ENCODE measurements at regions of chr4 and their contacts with region 1.

Region 1: DNA sequence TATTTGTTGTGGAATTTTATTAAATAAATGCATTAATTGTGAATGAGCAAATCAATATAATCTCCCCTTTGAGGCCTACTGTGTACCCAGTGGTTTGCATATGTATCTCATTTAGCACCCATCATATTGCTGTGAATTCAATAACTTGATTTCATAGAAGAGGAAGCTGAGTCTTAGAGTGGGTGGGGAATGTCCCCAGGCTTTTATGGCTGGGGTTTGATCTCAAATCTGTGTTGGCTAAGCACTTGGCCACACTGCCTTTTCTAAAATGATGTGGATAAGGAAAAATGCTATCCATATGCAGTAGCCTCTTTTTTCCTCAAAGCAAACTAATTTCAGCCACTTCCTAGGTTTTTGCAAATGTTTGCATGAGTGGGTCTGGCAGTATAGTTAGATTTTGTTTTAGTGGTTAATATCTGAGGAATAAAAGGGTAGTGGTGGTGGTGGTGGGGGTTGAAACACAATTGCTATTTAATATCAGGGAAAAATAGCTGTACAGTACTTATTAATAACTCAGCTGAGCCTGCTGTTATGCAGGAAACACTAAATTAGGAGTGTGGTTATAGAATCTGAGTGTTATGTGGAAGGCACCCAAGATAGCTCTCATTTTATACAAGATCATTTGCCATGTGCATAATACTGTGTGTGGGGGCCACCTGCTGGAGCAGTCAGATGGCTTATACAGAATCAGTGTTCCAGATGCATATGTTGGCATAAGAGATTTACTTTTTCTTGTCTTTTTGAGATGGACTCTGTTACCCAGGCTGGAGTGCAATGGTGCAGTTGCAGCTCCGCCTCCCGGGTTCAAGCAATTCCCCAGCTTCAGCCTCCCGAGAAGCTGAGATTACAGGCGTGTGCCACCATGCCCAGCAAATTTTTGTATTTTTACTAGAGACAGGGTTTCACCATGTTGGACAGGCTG is 108.0 kb downstream of the TMEM131L start:
- DNase-seq: peak; percentile 53 to 88 (median 69)
- ATAC-seq: peak; percentile 85
- H3K4me3 ChIP-seq: no peak overlapping the region
- H3K27ac ChIP-seq: peak overlapping the region; percentile 30
- H3K4me1 ChIP-seq: peaks cover 2% of the 10 kb centered on the region
- H3K27me3 ChIP-seq: no peaks in the 10 kb centered on the region

Region 2: GRCh38 chr4:152843481-152844090 is 730.6 kb before region 1 on chr4:
- intact Hi-C with region 1: no loop called
- DNase-seq: no peak
- ATAC-seq: no peak
- H3K4me3 ChIP-seq: no peak overlapping the region
- H3K27ac ChIP-seq: no peak overlapping the region
- H3K4me1 ChIP-seq: peaks cover 4% of the 10 kb centered on the region
- H3K27me3 ChIP-seq: no peaks in the 10 kb centered on the region

Region 3: GRCh38 chr4:153432968-153433753 is 141.0 kb before region 1 on chr4:
- intact Hi-C with region 1: loop called in 3 of 4 experiments (anchors 2 to 10 kb)
- DNase-seq: peak; percentile 46 to 59 (median 58)
- ATAC-seq: peak; percentile 82 to 83
- H3K4me3 ChIP-seq: no peak overlapping the region
- H3K27ac ChIP-seq: no peak overlapping the region
- H3K4me1 ChIP-seq: no peaks in the 10 kb centered on the region
- H3K27me3 ChIP-seq: no peaks in the 10 kb centered on the region

Region 4: GRCh38 chr4:153466081-153466948 is 107.8 kb before region 1 on chr4 and contains the start of gene TMEM131L:
- intact Hi-C with region 1: loop called in 3 of 4 experiments (anchors 10 kb)
- DNase-seq: peak; percentile 70 to 91 (median 88)
- ATAC-seq: peak; percentile 92 to 93
- H3K4me3 ChIP-seq: peak within 1 kb of the TSS; percentile 75
- H3K27ac ChIP-seq: peak within 1 kb of the TSS; percentile 62
- H3K4me1 ChIP-seq: peaks cover 4% of the 10 kb centered on the region
- H3K27me3 ChIP-seq: no peaks in the 10 kb centered on the region
- total RNA-seq, gene TMEM131L: 9.0 to 13.3 (median 11.3) TPM

Region 5: GRCh38 chr4:153611679-153612078 is 37.5 kb after region 1 on chr4:
- intact Hi-C with region 1: no loop called
- DNase-seq: no peak
- ATAC-seq: no peak
- H3K4me3 ChIP-seq: no peak overlapping the region
- H3K27ac ChIP-seq: no peak overlapping the region
- H3K4me1 ChIP-seq: no peaks in the 10 kb centered on the region
- H3K27me3 ChIP-seq: no peaks in the 10 kb centered on the region

Region 6: GRCh38 chr4:153643406-153644383 is 69.6 kb after region 1 on chr4:
- intact Hi-C with region 1: no loop called
- DNase-seq: no peak
- ATAC-seq: peak in 1 of 2 donors; percentile 36
- H3K4me3 ChIP-seq: no peak overlapping the region
- H3K27ac ChIP-seq: no peak overlapping the region
- H3K4me1 ChIP-seq: no peaks in the 10 kb centered on the region
- H3K27me3 ChIP-seq: no peaks in the 10 kb centered on the region

Region 7: GRCh38 chr4:153684182-153684970 is 110.2 kb after region 1 on chr4 and contains the start of gene TLR2:
- intact Hi-C with region 1: no loop called
- DNase-seq: peak; percentile 56 to 90 (median 84)
- ATAC-seq: peak; percentile 91 to 93
- H3K4me3 ChIP-seq: peak within 1 kb of the TSS; percentile 67
- H3K27ac ChIP-seq: no peak within 1 kb of the TSS
- H3K4me1 ChIP-seq: no peaks in the 10 kb centered on the region
- H3K27me3 ChIP-seq: no peaks in the 10 kb centered on the region
- total RNA-seq, gene TLR2: 3.1 to 15.1 (median 10.2) TPM

Measured in right cardiac atrium (tissue), 5 donors.